Activated CD4-positive, alpha-beta T cell treated with anti-CD3 and anti-CD28 coated beads, Interleukin-2, amount 10 ng/mL, durations not matched to agents 24 days and 14 days (primary cell): ENCODE measurements at regions of chr1 and their contacts with region 1.

Region 1: DNA sequence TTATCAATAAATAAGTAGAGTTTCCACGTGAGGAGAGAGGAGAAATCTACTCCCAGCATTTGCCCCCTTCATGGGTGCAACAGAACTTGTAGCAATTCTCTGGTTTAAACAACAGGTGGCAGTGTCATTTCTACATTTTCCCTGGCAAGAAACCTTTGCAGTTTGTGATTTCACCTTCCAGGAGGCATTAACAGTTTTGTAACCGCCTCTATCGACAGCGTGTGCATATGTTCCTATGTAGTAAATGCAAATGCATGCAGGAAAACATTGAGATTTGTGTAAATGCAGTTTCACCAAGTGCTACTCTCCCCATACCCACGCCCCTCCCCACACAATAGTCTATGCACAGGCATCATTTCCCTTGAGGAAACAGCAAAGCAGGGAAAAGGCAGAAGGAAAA is 494.7 kb downstream of the SMYD3 start:
- DNase-seq: peak; percentile 58
- H3K4me3 Mint-ChIP-seq: no peak overlapping the region
- H3K27ac Mint-ChIP-seq: no peak overlapping the region
- H3K4me1 Mint-ChIP-seq: no peaks in the 10 kb centered on the region
- H3K27me3 Mint-ChIP-seq: no peaks in the 10 kb centered on the region

Region 2: GRCh38 chr1:246078126-246078887 is 66.0 kb after region 1 on chr1:
- intact Hi-C with region 1: no loop called
- DNase-seq: no peak
- H3K4me3 Mint-ChIP-seq: no peak overlapping the region
- H3K27ac Mint-ChIP-seq: no peak overlapping the region
- H3K4me1 Mint-ChIP-seq: peaks cover 4% of the 10 kb centered on the region
- H3K27me3 Mint-ChIP-seq: no peaks in the 10 kb centered on the region

Region 3: DNA sequence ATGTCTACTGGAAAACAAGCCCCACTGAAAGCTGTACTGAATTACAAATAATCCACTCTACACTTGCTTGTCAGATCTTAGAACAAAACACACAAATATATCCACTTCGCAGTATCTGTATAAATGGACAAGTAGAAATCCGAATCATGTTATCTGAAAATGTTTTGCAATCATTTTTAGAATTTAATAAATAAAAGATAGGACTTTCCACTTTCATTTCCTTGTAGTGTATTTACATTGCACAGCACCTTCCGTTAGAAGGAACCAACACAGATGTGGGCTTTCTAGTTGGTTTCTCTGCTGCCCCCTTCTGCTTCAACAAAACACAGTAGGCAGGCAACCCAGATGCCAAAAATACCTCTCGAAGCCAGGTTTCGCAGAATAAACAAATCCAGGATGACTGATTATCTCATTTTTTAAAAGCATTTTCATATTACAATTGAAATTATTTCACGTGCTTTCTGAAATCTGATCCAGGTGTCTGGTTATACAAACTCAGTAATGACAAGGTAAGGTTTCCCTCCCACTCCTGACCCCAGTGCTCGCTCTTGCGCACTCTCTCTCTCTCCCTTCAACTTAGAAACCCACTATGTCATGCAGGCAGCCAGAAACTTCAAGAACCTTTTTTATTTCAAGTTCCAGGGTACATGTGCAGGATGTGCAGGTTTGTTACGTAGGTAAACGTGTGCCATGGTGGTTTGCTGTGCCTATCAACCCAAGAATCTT is 104.9 kb after region 1 on chr1:
- intact Hi-C with region 1: loop called (anchors 10 kb)
- DNase-seq: peak; percentile 74
- H3K4me3 Mint-ChIP-seq: peak overlapping the region; percentile 65
- H3K27ac Mint-ChIP-seq: peak overlapping the region; percentile 62
- H3K4me1 Mint-ChIP-seq: peaks cover 9% of the 10 kb centered on the region
- H3K27me3 Mint-ChIP-seq: no peaks in the 10 kb centered on the region

Region 4: DNA sequence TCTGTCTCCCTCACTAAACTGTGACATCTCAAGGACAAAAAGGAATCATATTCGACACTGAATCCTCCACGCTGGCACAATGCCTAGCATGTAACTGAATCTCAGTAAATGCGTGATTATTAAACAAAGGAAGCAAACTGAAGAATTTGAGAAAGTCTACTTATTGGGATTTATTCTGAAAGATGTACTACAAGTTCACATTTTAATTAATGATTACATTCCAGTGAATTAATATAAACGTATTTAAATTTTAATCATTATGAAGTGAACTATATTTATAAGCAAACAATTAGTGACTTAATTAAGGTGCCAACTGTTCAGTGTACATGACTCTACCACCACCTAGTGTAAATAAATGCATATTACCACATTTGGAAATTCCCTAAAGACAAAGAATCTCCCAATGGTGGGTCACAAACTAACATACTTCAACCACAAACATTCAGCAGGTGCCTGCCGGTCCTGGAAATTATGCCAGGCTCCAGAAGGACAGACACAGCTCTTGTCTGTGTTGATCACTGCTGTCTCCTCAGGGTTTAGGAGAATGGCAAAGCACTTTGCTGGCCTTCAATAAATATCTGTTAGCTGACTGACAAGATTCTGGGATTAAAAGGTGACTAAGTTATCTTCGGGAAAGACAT is 438.4 kb after region 1 on chr1:
- intact Hi-C with region 1: loop called (anchors 1 kb)
- DNase-seq: no peak
- H3K4me3 Mint-ChIP-seq: no peak overlapping the region
- H3K27ac Mint-ChIP-seq: no peak overlapping the region
- H3K4me1 Mint-ChIP-seq: no peaks in the 10 kb centered on the region
- H3K27me3 Mint-ChIP-seq: no peaks in the 10 kb centered on the region